WTC11 (cell line): ENCODE measurements at regions of chr17 and their contacts with region 1.

Region 1: GRCh38 chr17:45719335-45720071 is 64.6 kb upstream of the CRHR1 start:
- DNase-seq: peak; percentile 39
- ATAC-seq: peak; percentile 75
- H3K4me3 Mint-ChIP-seq: no peak overlapping the region
- H3K27ac Mint-ChIP-seq: no peak overlapping the region
- H3K4me1 Mint-ChIP-seq: peaks cover 15% of the 10 kb centered on the region
- H3K27me3 Mint-ChIP-seq: peaks cover 10% of the 10 kb centered on the region
- CTCF ChIP-seq: no peak; the same call in 1 of the 2 replicates

Region 2: GRCh38 chr17:45261577-45262515 is 457.7 kb before region 1 on chr17 and contains the start of gene SPATA32:
- CTCF ChIA-PET with region 1: no interaction called
- POLR2A ChIA-PET with region 1: no interaction called
- DNase-seq: peak; percentile 73
- ATAC-seq: peak; percentile 82
- H3K4me3 Mint-ChIP-seq: peak within 1 kb of the TSS; percentile 69
- H3K27ac Mint-ChIP-seq: peak within 1 kb of the TSS; percentile 32; the same call in 1 of the 2 replicates
- H3K4me1 Mint-ChIP-seq: peaks cover 18% of the 10 kb centered on the region
- H3K27me3 Mint-ChIP-seq: peaks cover 13% of the 10 kb centered on the region
- CTCF ChIP-seq: no peak
- total RNA-seq, gene SPATA32: 0.14 to 0.15 TPM in 2 of 3 replicates, not detected in the other

Region 3: GRCh38 chr17:45573924-45574770 is 145.4 kb before region 1 on chr17:
- CTCF ChIA-PET with region 1: no interaction called
- POLR2A ChIA-PET with region 1: no interaction called
- DNase-seq: no peak
- ATAC-seq: no peak
- H3K4me3 Mint-ChIP-seq: no peak overlapping the region
- H3K27ac Mint-ChIP-seq: peak overlapping the region; percentile 18
- H3K4me1 Mint-ChIP-seq: peaks cover 26% of the 10 kb centered on the region
- H3K27me3 Mint-ChIP-seq: no peaks in the 10 kb centered on the region
- CTCF ChIP-seq: no peak

Region 4: DNA sequence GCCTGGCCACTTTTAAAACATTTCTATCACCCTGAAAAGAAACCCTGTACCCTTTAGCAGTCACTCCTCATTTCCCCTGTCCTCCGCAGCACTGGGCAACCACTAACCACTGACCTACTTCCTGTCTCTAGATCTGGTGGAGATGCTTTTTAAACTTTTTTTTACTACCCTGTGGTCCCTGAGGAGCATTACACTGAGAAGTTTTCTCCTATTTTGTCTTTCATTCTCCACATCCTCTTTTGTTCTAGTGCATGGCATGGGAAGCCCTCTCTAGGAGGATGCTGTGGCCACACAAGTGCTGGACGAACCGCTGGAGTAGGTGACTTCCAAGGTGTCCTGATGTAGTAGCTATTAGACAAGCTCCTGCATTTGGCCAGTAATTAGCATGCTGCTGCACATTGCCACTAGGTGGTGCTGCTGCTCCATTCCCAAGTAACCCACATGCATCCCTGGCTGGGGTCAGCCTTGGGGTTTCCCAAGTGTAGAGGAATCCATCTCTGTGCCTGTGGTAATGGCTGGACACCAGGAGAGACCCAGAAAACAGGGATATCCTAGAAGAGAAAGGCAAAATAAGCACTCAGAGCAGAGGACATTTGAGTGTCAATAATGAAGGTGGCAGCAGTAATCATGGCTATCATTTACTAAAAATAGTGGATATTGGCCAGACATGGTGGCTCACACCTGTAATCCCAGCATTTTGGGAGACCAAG is 79.2 kb before region 1 on chr17:
- CTCF ChIA-PET with region 1: interaction called, 41 read pairs
- POLR2A ChIA-PET with region 1: no interaction called
- DNase-seq: peak; percentile 91
- ATAC-seq: peak; percentile 93
- H3K4me3 Mint-ChIP-seq: no peak overlapping the region
- H3K27ac Mint-ChIP-seq: no peak overlapping the region
- H3K4me1 Mint-ChIP-seq: no peaks in the 10 kb centered on the region
- H3K27me3 Mint-ChIP-seq: no peaks in the 10 kb centered on the region
- CTCF ChIP-seq: peak; percentile 93

Region 5: GRCh38 chr17:45666046-45666600 is 53.4 kb before region 1 on chr17:
- CTCF ChIA-PET with region 1: interaction called, 38 read pairs
- POLR2A ChIA-PET with region 1: no interaction called
- DNase-seq: peak; percentile 26
- ATAC-seq: peak; percentile 50
- H3K4me3 Mint-ChIP-seq: no peak overlapping the region
- H3K27ac Mint-ChIP-seq: no peak overlapping the region
- H3K4me1 Mint-ChIP-seq: no peaks in the 10 kb centered on the region
- H3K27me3 Mint-ChIP-seq: no peaks in the 10 kb centered on the region; the same call in 1 of the 2 replicates
- CTCF ChIP-seq: no peak

Region 6: GRCh38 chr17:45768000-45768399 is 48.5 kb after region 1 on chr17:
- CTCF ChIA-PET with region 1: interaction called, 25 read pairs
- POLR2A ChIA-PET with region 1: no interaction called
- DNase-seq: peak; percentile 51
- ATAC-seq: peak; percentile 80
- H3K4me3 Mint-ChIP-seq: no peak overlapping the region
- H3K27ac Mint-ChIP-seq: no peak overlapping the region
- H3K4me1 Mint-ChIP-seq: peaks cover 27% of the 10 kb centered on the region
- H3K27me3 Mint-ChIP-seq: no peaks in the 10 kb centered on the region
- CTCF ChIP-seq: no peak

Region 7: GRCh38 chr17:45828628-45829027 is 109.1 kb after region 1 on chr17:
- CTCF ChIA-PET with region 1: interaction called, 37 read pairs
- POLR2A ChIA-PET with region 1: no interaction called
- DNase-seq: no peak
- ATAC-seq: no peak
- H3K4me3 Mint-ChIP-seq: no peak overlapping the region
- H3K27ac Mint-ChIP-seq: no peak overlapping the region
- H3K4me1 Mint-ChIP-seq: no peaks in the 10 kb centered on the region
- H3K27me3 Mint-ChIP-seq: no peaks in the 10 kb centered on the region
- CTCF ChIP-seq: no peak

Region 8: GRCh38 chr17:45852535-45853297 is 133.2 kb after region 1 on chr17:
- CTCF ChIA-PET with region 1: interaction called, 23 read pairs
- POLR2A ChIA-PET with region 1: no interaction called
- DNase-seq: peak; percentile 76
- ATAC-seq: peak; percentile 65
- H3K4me3 Mint-ChIP-seq: no peak overlapping the region
- H3K27ac Mint-ChIP-seq: no peak overlapping the region
- H3K4me1 Mint-ChIP-seq: no peaks in the 10 kb centered on the region
- H3K27me3 Mint-ChIP-seq: peaks cover 5% of the 10 kb centered on the region
- CTCF ChIP-seq: peak; percentile 89

Region 9: DNA sequence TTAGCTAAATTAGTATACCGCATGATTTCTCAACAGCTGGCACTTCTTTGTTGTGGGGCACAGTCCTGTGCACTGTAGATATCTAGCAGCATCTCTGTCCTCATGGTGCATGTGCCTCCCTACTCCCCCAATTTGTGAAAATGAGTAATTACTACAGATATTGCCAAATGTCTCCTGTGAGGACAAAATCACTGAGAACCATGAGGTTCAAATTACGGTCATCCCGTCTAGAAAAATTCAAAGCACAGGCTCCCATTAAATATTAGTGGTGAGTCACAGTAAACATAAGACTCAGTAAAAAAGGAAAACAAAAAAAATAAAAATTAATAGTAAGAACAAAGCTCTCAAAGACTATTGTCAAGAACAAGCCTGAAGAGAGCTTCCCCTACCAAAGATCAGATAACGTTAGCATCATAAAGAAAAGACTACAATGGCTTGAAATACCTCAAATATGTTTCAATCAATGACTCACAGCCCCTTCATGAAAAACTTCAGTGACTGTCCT is 337.3 kb after region 1 on chr17:
- CTCF ChIA-PET with region 1: no interaction called
- POLR2A ChIA-PET with region 1: no interaction called
- DNase-seq: no peak
- ATAC-seq: no peak
- H3K4me3 Mint-ChIP-seq: no peak overlapping the region
- H3K27ac Mint-ChIP-seq: peak overlapping the region; percentile 73; the same call in 1 of the 2 replicates
- H3K4me1 Mint-ChIP-seq: peaks cover 38% of the 10 kb centered on the region
- H3K27me3 Mint-ChIP-seq: no peaks in the 10 kb centered on the region
- CTCF ChIP-seq: no peak